Activated naive CD4-positive, alpha-beta T cell treated with anti-CD3 and anti-CD28 coated beads, Interleukin-2, amount 10 ng/mL, durations not matched to agents 7 days and 5 days (primary cell): ENCODE measurements at regions of chr22 and their contacts with region 1.

Region 1: GRCh38 chr22:35627264-35628041 is 10.3 kb upstream of the MB start:
- DNase-seq: peak; percentile 66
- H3K4me3 Mint-ChIP-seq: peak overlapping the region; percentile 61
- H3K27ac Mint-ChIP-seq: no peak overlapping the region
- H3K4me1 Mint-ChIP-seq: peaks cover 22% of the 10 kb centered on the region
- H3K27me3 Mint-ChIP-seq: peaks cover 25% of the 10 kb centered on the region

Region 2: DNA sequence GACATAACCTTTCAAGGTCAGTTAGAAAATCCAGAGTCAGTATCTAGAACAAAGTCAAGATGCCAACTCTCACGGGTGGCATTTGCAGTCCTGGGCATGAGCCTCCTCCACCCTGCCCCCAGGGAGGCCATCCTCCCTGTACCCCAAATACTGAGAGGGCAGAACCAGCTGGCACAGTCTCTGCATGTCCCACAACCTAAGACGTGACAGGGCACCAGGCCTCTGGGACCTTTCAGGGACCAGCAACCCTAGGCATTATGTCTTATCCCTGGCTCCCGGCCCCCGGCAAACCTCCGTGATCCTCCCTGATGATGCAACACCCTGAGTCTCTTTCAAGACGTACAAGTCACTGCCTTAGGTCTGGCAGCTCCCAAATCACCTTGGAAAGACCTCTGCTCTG is 12.3 kb before region 1 on chr22:
- CTCF ChIA-PET with region 1: interaction called, 12 read pairs
- DNase-seq: no peak
- H3K4me3 Mint-ChIP-seq: no peak overlapping the region
- H3K27ac Mint-ChIP-seq: no peak overlapping the region
- H3K4me1 Mint-ChIP-seq: peaks cover 21% of the 10 kb centered on the region
- H3K27me3 Mint-ChIP-seq: peaks cover 13% of the 10 kb centered on the region

Region 3: GRCh38 chr22:35838855-35839576 is 211.6 kb after region 1 on chr22:
- CTCF ChIA-PET with region 1: interaction called, 10 read pairs
- DNase-seq: no peak
- H3K4me3 Mint-ChIP-seq: no peak overlapping the region
- H3K27ac Mint-ChIP-seq: no peak overlapping the region
- H3K4me1 Mint-ChIP-seq: peaks cover 2% of the 10 kb centered on the region
- H3K27me3 Mint-ChIP-seq: peaks cover 38% of the 10 kb centered on the region

Region 4: DNA sequence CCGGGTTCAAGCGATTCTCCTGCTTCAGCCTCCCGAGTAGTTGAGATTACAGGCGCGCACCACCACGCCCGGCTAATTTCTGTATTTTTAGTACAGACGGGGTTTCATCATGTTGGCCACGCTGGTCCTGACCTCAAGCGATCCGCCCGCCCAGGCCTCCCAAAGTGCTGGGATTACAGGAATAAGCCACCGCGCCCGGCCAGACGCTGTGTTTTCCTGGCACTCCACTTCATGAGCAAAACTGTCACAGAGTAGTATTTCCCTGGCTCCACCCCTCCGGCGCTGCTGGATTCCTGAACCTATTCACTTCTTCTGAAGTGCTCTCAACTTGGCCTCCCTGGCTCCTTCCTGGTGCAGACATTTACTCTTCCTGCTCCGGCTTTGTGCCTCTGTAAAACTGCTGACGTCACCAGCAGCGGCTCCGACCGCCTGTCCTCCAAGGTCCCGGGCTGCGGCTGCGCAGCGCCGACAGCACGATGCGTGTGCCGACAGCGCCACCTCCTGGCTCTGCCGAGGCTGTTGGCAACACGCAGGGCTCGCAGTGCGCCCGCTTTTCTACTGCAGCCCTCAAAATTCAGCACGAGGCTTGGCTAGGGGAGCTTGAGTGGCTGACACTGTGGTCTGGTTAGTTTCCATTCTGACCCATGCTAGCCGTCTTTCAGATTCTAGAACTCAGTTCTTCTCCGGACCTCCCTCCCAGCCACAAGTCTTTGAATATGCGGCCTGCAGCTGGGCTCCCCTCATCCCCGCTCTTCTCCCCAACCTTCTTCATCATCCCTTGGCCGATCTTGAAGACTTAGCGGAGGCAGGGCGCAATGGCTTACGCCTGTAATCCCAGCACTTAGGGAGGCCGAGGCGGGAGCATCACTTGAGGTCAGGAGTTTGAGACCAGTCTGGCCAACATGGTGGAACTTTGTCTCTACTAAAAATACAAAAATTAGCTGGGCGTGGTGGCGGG is 496.5 kb after region 1 on chr22:
- CTCF ChIA-PET with region 1: interaction called, 10 read pairs
- DNase-seq: peak; percentile 94
- H3K4me3 Mint-ChIP-seq: peak overlapping the region; percentile 6
- H3K27ac Mint-ChIP-seq: peak overlapping the region; percentile 73
- H3K4me1 Mint-ChIP-seq: peaks cover 14% of the 10 kb centered on the region
- H3K27me3 Mint-ChIP-seq: peaks cover 39% of the 10 kb centered on the region